Naive thymus-derived CD4-positive, alpha-beta T cell (primary cell): ENCODE measurements at regions of chr3 and their contacts with region 1.

Region 1: DNA sequence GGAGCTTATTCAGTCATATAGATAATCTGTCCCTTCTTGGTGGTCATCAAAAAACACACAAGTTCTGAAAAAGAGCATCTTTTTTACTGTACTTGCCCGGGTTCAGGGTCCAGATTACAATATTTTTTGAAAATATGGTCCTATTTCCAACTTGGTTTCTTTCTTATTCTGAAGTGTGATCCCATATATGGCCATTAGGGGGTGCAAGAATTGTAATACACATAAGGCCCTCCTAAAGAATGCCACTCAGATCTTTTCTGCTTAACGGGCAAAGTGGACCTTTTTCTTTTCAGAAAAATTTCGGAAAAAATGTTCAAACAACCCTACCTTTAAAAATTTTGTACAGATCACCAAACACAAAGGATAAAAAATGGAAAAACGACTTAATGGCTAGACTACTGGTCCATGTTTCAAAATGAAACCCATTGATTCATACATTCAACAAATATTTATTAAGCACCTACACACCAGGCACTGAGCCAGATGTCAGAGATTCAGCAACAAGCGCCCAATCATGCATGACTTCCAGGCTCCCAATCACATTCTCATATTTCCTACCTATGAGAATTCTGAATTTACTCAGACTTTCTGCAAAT is 102.0 kb upstream of the MYRIP start:
- DNase-seq: peak in 2 of 9 donors; percentile 0 to 4
- ATAC-seq: no peak
- H3K4me3 ChIP-seq: no peak overlapping the region
- H3K4me3 Mint-ChIP-seq: no peak overlapping the region
- H3K27ac ChIP-seq: no peak overlapping the region
- H3K27ac Mint-ChIP-seq: no peak overlapping the region
- H3K4me1 ChIP-seq: no peaks in the 10 kb centered on the region
- H3K4me1 Mint-ChIP-seq: no peaks in the 10 kb centered on the region
- H3K27me3 ChIP-seq: no peaks in the 10 kb centered on the region
- H3K27me3 Mint-ChIP-seq: peaks cover 3 to 22% (median 6%) of the 10 kb centered on the region in 5 donors

Region 2: GRCh38 chr3:39762537-39763070 is 55.2 kb after region 1 on chr3:
- CTCF ChIA-PET with region 1: no interaction called
- POLR2A ChIA-PET with region 1: no interaction called
- intact Hi-C with region 1: no loop called
- DNase-seq: no peak
- ATAC-seq: no peak
- H3K4me3 ChIP-seq: no peak overlapping the region
- H3K4me3 Mint-ChIP-seq: no peak overlapping the region
- H3K27ac ChIP-seq: no peak overlapping the region
- H3K27ac Mint-ChIP-seq: no peak overlapping the region
- H3K4me1 ChIP-seq: no peaks in the 10 kb centered on the region
- H3K4me1 Mint-ChIP-seq: no peaks in the 10 kb centered on the region
- H3K27me3 ChIP-seq: no peaks in the 10 kb centered on the region
- H3K27me3 Mint-ChIP-seq: peaks cover 0 to 11% (median 10%) of the 10 kb centered on the region in 5 donors

Region 3: GRCh38 chr3:39990532-39990931 is 283.1 kb after region 1 on chr3:
- CTCF ChIA-PET with region 1: no interaction called
- POLR2A ChIA-PET with region 1: no interaction called
- intact Hi-C with region 1: loop called in 1 of 2 experiments (anchors 1 kb)
- DNase-seq: no peak
- ATAC-seq: no peak
- H3K4me3 ChIP-seq: no peak overlapping the region
- H3K4me3 Mint-ChIP-seq: no peak overlapping the region
- H3K27ac ChIP-seq: no peak overlapping the region
- H3K27ac Mint-ChIP-seq: no peak overlapping the region
- H3K4me1 ChIP-seq: no peaks in the 10 kb centered on the region
- H3K4me1 Mint-ChIP-seq: no peaks in the 10 kb centered on the region
- H3K27me3 ChIP-seq: no peaks in the 10 kb centered on the region
- H3K27me3 Mint-ChIP-seq: peaks cover 2 to 22% (median 16%) of the 10 kb centered on the region in 5 donors

Region 4: DNA sequence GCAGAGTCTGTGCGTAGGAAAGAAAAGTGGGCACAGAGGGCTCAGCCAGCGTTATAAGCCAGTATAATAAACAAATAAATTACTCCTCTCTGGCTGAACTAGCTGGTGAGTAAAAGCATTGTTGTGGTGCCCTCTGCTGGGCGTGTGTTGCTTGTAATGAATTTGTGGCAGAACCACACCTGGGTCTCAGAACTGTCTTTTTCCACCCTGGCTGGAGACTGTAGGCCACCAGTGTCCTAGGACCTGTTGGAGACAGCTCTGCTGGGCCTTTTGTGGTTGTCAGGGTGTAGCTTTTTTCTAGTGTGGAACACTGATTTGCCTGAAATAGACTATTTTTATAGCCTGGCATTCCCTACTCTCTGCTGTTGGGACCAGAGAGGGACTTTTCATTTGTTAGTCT is 471.6 kb after region 1 on chr3:
- CTCF ChIA-PET with region 1: no interaction called
- POLR2A ChIA-PET with region 1: no interaction called
- intact Hi-C with region 1: loop called in 1 of 2 experiments (anchors 5 kb)
- DNase-seq: peak in 8 of 9 donors; percentile 19 to 45 (median 26)
- ATAC-seq: peak; percentile 47
- H3K4me3 ChIP-seq: no peak overlapping the region
- H3K4me3 Mint-ChIP-seq: no peak overlapping the region
- H3K27ac ChIP-seq: no peak overlapping the region
- H3K27ac Mint-ChIP-seq: no peak overlapping the region
- H3K4me1 ChIP-seq: no peaks in the 10 kb centered on the region
- H3K4me1 Mint-ChIP-seq: no peaks in the 10 kb centered on the region
- H3K27me3 ChIP-seq: no peaks in the 10 kb centered on the region
- H3K27me3 Mint-ChIP-seq: no peaks in the 10 kb centered on the region